A673 (cell line): ENCODE measurements at regions of chr5 and their contacts with region 1.

Region 1: GRCh38 chr5:14129123-14129522 is 14.0 kb upstream of the TRIO start:
- DNase-seq: no peak
- H3K4me3 ChIP-seq: no peak overlapping the region
- H3K27ac ChIP-seq: no peak overlapping the region
- H3K4me1 ChIP-seq: no peaks in the 10 kb centered on the region
- H3K27me3 ChIP-seq: no peaks in the 10 kb centered on the region
- CTCF ChIP-seq: no peak

Region 2: DNA sequence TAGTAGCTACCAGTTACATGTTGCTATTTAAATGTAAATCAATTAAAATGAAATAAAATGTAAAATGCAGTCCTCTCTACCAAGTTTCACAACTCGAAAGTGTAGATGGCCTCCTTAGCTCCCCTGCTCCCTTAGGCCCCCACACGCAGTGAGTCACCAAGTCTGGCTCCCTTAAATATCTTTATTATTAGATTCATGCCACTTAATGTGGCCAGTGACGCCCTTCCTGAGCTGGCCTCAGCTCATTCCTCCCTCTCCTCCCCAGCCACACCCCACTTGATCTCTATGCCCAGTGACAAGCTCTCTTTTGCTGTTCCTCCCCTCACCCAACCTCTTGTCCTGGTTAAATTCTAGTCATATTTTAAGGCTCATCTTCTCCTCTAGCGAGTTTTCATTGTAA is 96.2 kb before region 1 on chr5:
- CTCF ChIA-PET with region 1: no interaction called
- POLR2A ChIA-PET with region 1: no interaction called
- intact Hi-C with region 1: no loop called
- DNase-seq: peak; percentile 13
- H3K4me3 ChIP-seq: no peak overlapping the region
- H3K27ac ChIP-seq: no peak overlapping the region
- H3K4me1 ChIP-seq: peaks cover 12% of the 10 kb centered on the region
- H3K27me3 ChIP-seq: no peaks in the 10 kb centered on the region
- CTCF ChIP-seq: no peak

Region 3: DNA sequence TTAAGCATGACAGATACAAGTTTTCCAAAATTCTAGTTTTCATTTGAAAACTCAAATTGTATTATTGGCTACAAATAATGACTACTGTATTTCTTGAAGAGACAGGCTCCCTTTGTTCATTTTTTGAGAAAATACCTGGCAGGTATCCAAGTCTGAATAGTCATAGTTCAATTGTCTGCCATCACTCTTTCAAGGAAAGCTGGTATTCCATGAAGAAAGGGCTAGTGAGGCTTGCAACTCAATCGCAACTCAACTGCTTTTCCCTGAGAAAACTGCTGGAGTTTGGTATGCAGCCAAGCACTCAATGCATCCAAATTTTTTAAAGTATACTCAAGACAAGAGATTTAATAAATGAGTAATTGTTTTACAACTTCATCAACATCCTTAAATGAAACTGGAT is 47.3 kb before region 1 on chr5:
- CTCF ChIA-PET with region 1: no interaction called
- POLR2A ChIA-PET with region 1: no interaction called
- intact Hi-C with region 1: no loop called
- DNase-seq: no peak
- H3K4me3 ChIP-seq: no peak overlapping the region
- H3K27ac ChIP-seq: no peak overlapping the region
- H3K4me1 ChIP-seq: no peaks in the 10 kb centered on the region
- H3K27me3 ChIP-seq: peaks cover 5% of the 10 kb centered on the region
- CTCF ChIP-seq: no peak

Region 4: DNA sequence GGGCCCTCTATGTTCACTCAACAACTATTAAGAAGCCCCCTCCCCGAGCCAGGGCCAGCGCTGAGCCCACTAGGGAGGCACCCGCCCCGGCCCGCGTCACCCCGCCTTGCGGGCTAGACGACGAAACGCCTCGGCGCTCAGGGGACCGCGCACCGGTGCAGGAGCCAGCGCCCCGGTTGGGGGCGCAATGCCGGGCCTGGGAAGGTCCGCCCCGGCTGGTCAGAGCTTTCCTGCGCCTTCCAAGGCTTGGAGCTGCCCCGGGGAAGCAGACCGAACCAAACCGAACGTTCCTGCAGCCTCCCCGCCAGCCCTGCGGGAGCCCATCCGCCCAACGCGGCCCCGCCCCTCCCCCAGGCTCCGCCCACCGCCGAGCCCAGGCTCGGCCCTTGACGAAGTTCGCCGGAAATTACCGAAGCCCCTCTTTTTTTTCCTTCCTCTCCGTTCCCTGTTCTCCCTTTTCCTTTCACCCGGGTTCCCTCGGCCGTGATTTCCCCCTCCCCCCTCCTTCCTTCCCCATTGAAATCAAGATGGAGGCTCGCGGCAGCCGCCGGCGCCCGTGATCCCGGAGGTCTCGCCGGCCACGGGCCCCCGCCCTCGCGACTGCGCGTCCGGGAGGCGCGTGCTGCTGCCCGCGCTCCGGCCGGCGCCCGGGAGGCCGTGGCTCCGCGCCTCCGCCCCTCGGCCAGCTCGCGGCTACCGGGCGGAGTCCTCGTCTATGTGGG is 13.9 kb after region 1 on chr5 and contains the start of gene TRIO:
- CTCF ChIA-PET with region 1: no interaction called
- POLR2A ChIA-PET with region 1: interaction called, 21 read pairs
- intact Hi-C with region 1: no loop called
- DNase-seq: peak; percentile 96
- H3K4me3 ChIP-seq: peak within 1 kb of the TSS; percentile 96
- H3K27ac ChIP-seq: peak within 1 kb of the TSS; percentile 78
- H3K4me1 ChIP-seq: peaks cover 25% of the 10 kb centered on the region
- H3K27me3 ChIP-seq: no peaks in the 10 kb centered on the region
- CTCF ChIP-seq: peak; percentile 56
- total RNA-seq, gene TRIO: 99.8 and 105 TPM in 2 replicates

Region 5: GRCh38 chr5:14379739-14380497 is 250.8 kb after region 1 on chr5:
- CTCF ChIA-PET with region 1: no interaction called
- POLR2A ChIA-PET with region 1: no interaction called
- intact Hi-C with region 1: no loop called
- DNase-seq: no peak
- H3K4me3 ChIP-seq: no peak overlapping the region
- H3K27ac ChIP-seq: no peak overlapping the region
- H3K4me1 ChIP-seq: peaks cover 11% of the 10 kb centered on the region
- H3K27me3 ChIP-seq: no peaks in the 10 kb centered on the region
- CTCF ChIP-seq: no peak